Aorta (tissue), 5 donors: ENCODE measurements at regions of chr2 and their contacts with region 1.

Region 1: GRCh38 chr2:26846328-26847306 is 1.3 kb upstream of the DPYSL5 start:
- DNase-seq: peak; percentile 74 to 89
- ATAC-seq: peak; percentile 85
- H3K4me3 ChIP-seq: no peak overlapping the region
- H3K27ac ChIP-seq: no peak overlapping the region
- H3K4me1 ChIP-seq: no peaks in the 10 kb centered on the region
- H3K27me3 ChIP-seq: peaks cover 0 to 2% of the 10 kb centered on the region in 2 donors

Region 2: GRCh38 chr2:26785431-26786206 is 61.0 kb before region 1 on chr2 and contains the start of gene CENPA:
- intact Hi-C with region 1: no loop called
- DNase-seq: peak; percentile 98
- ATAC-seq: peak; percentile 98
- H3K4me3 ChIP-seq: peak within 1 kb of the TSS; percentile 45 to 54
- H3K27ac ChIP-seq: no peak within 1 kb of the TSS
- H3K4me1 ChIP-seq: no peaks in the 10 kb centered on the region
- H3K27me3 ChIP-seq: no peaks in the 10 kb centered on the region
- total RNA-seq, gene CENPA: 0.23 to 1.2 TPM

Region 3: DNA sequence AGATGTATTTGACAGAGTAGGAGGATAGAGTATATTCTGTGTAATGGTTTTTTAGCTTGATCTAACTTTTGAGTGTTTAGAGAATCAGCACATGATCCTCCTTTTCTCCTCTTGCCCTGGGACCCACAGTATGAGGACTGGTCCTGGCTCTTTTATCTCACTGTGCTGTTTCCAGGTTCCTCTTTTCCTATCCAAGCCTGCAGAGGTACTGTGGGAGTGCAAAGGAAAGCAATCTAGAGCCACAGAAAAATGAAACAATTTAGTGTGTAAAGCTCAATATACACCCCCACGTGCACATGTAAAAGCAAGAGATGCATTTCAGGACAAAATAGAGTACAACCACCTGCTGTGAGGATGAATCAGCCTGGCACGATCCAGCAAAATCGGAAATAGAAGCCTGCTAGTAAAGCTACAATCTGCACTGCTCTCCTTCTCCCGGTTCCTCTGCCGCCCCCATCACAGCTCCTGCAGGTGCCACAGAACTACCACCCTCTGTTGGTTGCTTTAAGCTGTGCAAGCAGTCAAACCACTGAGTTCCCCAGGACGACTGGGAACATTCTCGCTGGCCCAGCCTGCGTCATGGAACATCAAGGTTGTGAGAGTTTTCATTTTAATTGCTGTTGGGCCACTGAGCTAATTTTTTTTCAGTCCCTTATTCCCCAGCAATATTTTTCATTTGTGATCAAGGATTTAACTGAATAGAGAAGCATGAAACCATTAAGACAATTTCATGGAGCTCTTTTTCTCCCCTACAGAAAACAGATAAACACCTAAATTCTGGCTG is 76.0 kb after region 1 on chr2:
- intact Hi-C with region 1: loop called in 1 of 2 experiments (anchors 5 kb)
- DNase-seq: peak in 1 of 2 donors; percentile 72
- ATAC-seq: no peak
- H3K4me3 ChIP-seq: no peak overlapping the region
- H3K27ac ChIP-seq: no peak overlapping the region
- H3K4me1 ChIP-seq: no peaks in the 10 kb centered on the region
- H3K27me3 ChIP-seq: no peaks in the 10 kb centered on the region

Region 4: GRCh38 chr2:26942543-26943295 is 96.1 kb after region 1 on chr2:
- intact Hi-C with region 1: loop called (anchors 1 to 5 kb)
- DNase-seq: peak; percentile 62 to 87
- ATAC-seq: peak; percentile 41
- H3K4me3 ChIP-seq: no peak overlapping the region
- H3K27ac ChIP-seq: no peak overlapping the region
- H3K4me1 ChIP-seq: no peaks in the 10 kb centered on the region
- H3K27me3 ChIP-seq: no peaks in the 10 kb centered on the region

Region 5: GRCh38 chr2:27264753-27265535 is 418.3 kb after region 1 on chr2:
- intact Hi-C with region 1: no loop called
- DNase-seq: peak; percentile 68 to 85
- ATAC-seq: peak; percentile 65
- H3K4me3 ChIP-seq: no peak overlapping the region
- H3K27ac ChIP-seq: no peak overlapping the region
- H3K4me1 ChIP-seq: no peaks in the 10 kb centered on the region
- H3K27me3 ChIP-seq: no peaks in the 10 kb centered on the region